ENCODE measurements at regions of chr7 and their contacts with region 1.

Region 1: DNA sequence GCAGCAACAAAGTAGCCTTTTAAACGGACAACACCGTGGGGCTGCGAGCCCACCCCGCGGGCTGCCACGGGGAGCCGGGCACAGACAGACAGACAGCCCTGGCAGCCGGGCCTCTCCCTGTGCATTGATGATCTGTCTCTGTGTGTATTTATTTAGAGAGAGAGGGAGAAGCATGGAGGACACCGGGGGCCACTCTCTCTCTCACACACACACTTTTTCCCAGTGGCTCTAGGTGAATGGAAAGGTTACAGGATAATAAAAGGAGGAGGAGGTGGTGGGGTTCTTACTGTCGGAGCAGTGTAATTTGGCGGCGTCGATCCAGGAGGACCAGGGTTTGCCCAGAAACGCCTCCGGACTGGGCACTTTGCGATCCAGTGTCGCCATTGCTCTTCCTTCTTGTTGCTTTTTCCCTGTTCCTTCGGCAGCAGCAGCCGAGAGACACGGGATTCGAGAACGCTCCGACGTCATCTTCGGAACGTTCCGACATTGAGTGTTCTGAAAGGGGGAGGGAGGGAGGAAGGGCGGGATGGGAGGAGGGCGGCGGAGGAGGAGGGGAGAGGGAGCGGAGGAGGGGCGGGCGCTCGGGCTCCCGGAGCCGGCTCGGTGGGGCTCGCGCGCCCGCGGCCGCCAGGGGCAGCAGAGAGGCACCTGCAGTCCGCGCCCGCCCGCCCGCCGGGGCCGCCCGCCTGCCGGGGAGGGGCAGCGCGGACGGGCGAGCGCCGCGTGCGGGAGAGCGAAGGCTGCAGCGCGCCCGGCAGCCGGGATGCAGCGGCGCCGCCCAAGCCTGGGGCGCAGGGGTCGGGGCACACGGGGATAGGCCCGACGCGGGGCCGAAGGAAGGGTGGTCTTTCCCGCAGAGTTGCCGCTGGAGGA is at the start of gene ATXN7L1:
- DNase-seq: peak; percentile 75 to 94 (median 87)
- ATAC-seq: peak; percentile 99
- H3K4me3 ChIP-seq: peak within 1 kb of the TSS; percentile 97
- H3K4me3 Mint-ChIP-seq: peak within 1 kb of the TSS; percentile 90 to 100 (median 99)
- H3K27ac ChIP-seq: peak within 1 kb of the TSS; percentile 81
- H3K27ac Mint-ChIP-seq: peak within 1 kb of the TSS; percentile 85 to 99 (median 98)
- H3K4me1 ChIP-seq: peaks cover 10 to 33% of the 10 kb centered on the region in 2 donors
- H3K4me1 Mint-ChIP-seq: peaks cover 34 to 73% (median 52%) of the 10 kb centered on the region in 7 donors
- H3K27me3 ChIP-seq: no peaks in the 10 kb centered on the region
- H3K27me3 Mint-ChIP-seq: peaks cover 0 to 34% (median 0%) of the 10 kb centered on the region in 5 donors
- total RNA-seq, gene ATXN7L1: 18.5 to 52.4 (median 46.7) TPM

Region 2: GRCh38 chr7:105531792-105532671 is 344.3 kb before region 1 on chr7 and contains the start of gene RINT1:
- CTCF ChIA-PET with region 1: no interaction called
- POLR2A ChIA-PET with region 1: no interaction called
- intact Hi-C with region 1: loop called in 1 of 2 experiments (anchors 5 kb)
- DNase-seq: peak; percentile 72 to 90 (median 81)
- ATAC-seq: peak; percentile 97
- H3K4me3 ChIP-seq: peak within 1 kb of the TSS; percentile 86
- H3K4me3 Mint-ChIP-seq: peak within 1 kb of the TSS; percentile 87 to 99 (median 93)
- H3K27ac ChIP-seq: peak within 1 kb of the TSS; percentile 83
- H3K27ac Mint-ChIP-seq: peak within 1 kb of the TSS; percentile 87 to 98 (median 92)
- H3K4me1 ChIP-seq: peaks cover 13 to 18% of the 10 kb centered on the region in 2 donors
- H3K4me1 Mint-ChIP-seq: peaks cover 21 to 59% (median 38%) of the 10 kb centered on the region in 7 donors
- H3K27me3 ChIP-seq: no peaks in the 10 kb centered on the region
- H3K27me3 Mint-ChIP-seq: no peaks in the 10 kb centered on the region
- total RNA-seq, gene RINT1: 23.0 to 31.8 (median 26.0) TPM

Region 3: GRCh38 chr7:105691733-105692564 is 184.4 kb before region 1 on chr7:
- CTCF ChIA-PET with region 1: no interaction called
- POLR2A ChIA-PET with region 1: interaction called, 9 read pairs
- intact Hi-C with region 1: loop called in 1 of 2 experiments (anchors 1 kb)
- DNase-seq: peak; percentile 22 to 94 (median 90)
- ATAC-seq: peak; percentile 89
- H3K4me3 ChIP-seq: peak overlapping the region; percentile 94
- H3K4me3 Mint-ChIP-seq: peak overlapping the region; percentile 84 to 98 (median 92)
- H3K27ac ChIP-seq: peak overlapping the region; percentile 83
- H3K27ac Mint-ChIP-seq: peak overlapping the region; percentile 95 to 100 (median 99)
- H3K4me1 ChIP-seq: peaks cover 19 to 21% of the 10 kb centered on the region in 2 donors
- H3K4me1 Mint-ChIP-seq: peaks cover 33 to 78% (median 65%) of the 10 kb centered on the region in 7 donors
- H3K27me3 ChIP-seq: no peaks in the 10 kb centered on the region
- H3K27me3 Mint-ChIP-seq: no peaks in the 10 kb centered on the region

Region 4: DNA sequence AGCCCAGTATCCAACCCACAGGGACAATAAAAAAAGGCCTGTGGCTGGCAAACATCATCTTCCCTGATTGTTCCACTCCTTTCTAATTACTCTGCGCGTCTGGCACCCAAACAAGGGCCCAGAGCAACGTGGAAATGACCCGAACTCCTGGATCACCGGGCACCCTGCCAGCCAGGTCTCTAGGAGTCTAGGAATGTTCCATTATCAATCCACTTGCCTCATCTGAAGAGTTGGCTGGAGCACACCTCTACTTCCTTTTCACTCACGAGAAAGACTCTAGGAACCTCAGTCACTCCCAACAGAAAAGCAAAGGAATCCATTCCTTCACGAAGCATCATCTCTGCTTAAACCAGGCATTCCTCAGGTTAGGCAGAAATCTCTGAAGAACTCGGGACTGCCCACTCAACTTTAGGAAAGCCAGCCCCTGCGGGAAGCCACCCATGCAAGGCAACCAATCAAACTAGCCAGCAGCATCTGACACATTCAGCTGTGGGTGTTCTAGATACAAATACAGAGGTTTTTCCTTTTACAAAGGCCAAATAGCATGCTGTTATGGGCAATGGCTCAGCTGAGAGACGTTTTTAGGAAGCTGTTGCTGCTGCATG is 37.6 kb before region 1 on chr7:
- CTCF ChIA-PET with region 1: no interaction called
- POLR2A ChIA-PET with region 1: no interaction called
- intact Hi-C with region 1: no loop called
- DNase-seq: no peak
- ATAC-seq: no peak
- H3K4me3 ChIP-seq: no peak overlapping the region
- H3K4me3 Mint-ChIP-seq: no peak overlapping the region
- H3K27ac ChIP-seq: no peak overlapping the region
- H3K27ac Mint-ChIP-seq: peak overlapping the region in 1 of 9 donors; percentile 17
- H3K4me1 ChIP-seq: peaks cover 0 to 3% of the 10 kb centered on the region in 2 donors
- H3K4me1 Mint-ChIP-seq: peaks cover 4 to 40% (median 17%) of the 10 kb centered on the region in 7 donors
- H3K27me3 ChIP-seq: no peaks in the 10 kb centered on the region
- H3K27me3 Mint-ChIP-seq: peaks cover 0 to 7% (median 0%) of the 10 kb centered on the region in 5 donors

Region 5: DNA sequence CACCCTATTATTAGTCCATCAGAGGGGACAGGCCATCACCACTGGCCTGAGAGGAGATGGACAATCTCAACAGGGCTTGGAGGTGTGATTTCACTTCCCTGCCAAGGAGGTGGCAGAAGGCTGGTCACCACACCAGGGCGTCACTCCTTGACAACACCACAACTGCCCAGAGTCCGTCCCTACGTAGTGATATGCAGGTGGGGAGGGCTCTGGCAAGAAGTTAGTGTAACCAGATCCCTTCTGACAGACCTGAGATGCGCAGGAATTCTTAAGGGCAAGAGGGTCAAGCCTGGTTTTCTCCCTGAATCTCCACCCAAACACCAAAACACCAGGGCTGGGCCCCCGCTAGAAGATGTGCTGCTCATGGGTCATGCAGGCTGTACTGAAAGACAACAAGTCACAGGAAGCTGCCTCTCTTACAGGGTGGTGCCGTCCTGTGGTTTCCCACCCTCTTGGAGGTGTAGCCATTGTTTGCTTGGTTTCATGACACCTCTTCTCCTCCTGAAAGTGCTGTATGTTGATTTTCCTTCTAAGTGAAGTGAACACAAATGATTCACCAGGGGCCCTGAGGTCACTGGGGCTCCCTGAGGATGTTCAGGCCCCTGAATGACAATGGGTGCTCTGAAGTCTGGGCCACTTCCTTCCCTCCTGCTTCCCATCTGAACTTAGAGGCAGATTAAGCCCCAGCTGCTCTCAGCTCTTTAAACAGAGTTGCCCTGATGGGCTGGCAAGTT is 27.0 kb before region 1 on chr7:
- CTCF ChIA-PET with region 1: interaction called, 4 read pairs
- POLR2A ChIA-PET with region 1: interaction called, 9 read pairs
- intact Hi-C with region 1: loop called (anchors 1 kb)
- DNase-seq: peak; percentile 16 to 69 (median 60)
- ATAC-seq: peak; percentile 94
- H3K4me3 ChIP-seq: peak overlapping the region; percentile 38
- H3K4me3 Mint-ChIP-seq: peak overlapping the region; percentile 74 to 85 (median 83)
- H3K27ac ChIP-seq: peak overlapping the region; percentile 43
- H3K27ac Mint-ChIP-seq: peak overlapping the region; percentile 82 to 98 (median 92)
- H3K4me1 ChIP-seq: peaks cover 46 to 47% of the 10 kb centered on the region in 2 donors
- H3K4me1 Mint-ChIP-seq: peaks cover 44 to 78% (median 69%) of the 10 kb centered on the region in 7 donors
- H3K27me3 ChIP-seq: no peaks in the 10 kb centered on the region
- H3K27me3 Mint-ChIP-seq: peaks cover 0 to 2% (median 0%) of the 10 kb centered on the region in 5 donors

Region 6: DNA sequence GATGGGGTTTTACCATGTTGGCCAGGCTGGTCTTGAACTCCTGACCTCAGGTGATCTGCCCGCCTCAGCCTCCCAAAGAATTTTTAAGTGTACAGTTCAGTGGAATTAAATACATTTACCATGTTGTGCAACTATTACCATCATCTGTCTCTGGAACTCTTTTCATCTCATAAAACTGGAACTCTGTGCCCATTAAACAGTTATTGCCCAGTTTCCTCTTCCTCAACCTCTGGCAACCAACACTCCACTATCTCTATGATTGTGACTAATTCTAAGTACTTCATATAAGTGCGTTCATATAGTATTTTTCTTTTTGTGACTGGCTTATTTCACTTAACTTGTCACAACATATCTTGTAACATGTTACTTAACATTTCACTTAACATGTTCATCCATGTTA is 41.3 kb after region 1 on chr7:
- CTCF ChIA-PET with region 1: no interaction called
- POLR2A ChIA-PET with region 1: no interaction called
- intact Hi-C with region 1: no loop called
- DNase-seq: no peak
- ATAC-seq: no peak
- H3K4me3 ChIP-seq: no peak overlapping the region
- H3K4me3 Mint-ChIP-seq: no peak overlapping the region
- H3K27ac ChIP-seq: no peak overlapping the region
- H3K27ac Mint-ChIP-seq: no peak overlapping the region
- H3K4me1 ChIP-seq: no peaks in the 10 kb centered on the region
- H3K4me1 Mint-ChIP-seq: peaks cover 0 to 11% (median 0%) of the 10 kb centered on the region in 7 donors
- H3K27me3 ChIP-seq: no peaks in the 10 kb centered on the region
- H3K27me3 Mint-ChIP-seq: peaks cover 0 to 24% (median 0%) of the 10 kb centered on the region in 5 donors

Region 7: DNA sequence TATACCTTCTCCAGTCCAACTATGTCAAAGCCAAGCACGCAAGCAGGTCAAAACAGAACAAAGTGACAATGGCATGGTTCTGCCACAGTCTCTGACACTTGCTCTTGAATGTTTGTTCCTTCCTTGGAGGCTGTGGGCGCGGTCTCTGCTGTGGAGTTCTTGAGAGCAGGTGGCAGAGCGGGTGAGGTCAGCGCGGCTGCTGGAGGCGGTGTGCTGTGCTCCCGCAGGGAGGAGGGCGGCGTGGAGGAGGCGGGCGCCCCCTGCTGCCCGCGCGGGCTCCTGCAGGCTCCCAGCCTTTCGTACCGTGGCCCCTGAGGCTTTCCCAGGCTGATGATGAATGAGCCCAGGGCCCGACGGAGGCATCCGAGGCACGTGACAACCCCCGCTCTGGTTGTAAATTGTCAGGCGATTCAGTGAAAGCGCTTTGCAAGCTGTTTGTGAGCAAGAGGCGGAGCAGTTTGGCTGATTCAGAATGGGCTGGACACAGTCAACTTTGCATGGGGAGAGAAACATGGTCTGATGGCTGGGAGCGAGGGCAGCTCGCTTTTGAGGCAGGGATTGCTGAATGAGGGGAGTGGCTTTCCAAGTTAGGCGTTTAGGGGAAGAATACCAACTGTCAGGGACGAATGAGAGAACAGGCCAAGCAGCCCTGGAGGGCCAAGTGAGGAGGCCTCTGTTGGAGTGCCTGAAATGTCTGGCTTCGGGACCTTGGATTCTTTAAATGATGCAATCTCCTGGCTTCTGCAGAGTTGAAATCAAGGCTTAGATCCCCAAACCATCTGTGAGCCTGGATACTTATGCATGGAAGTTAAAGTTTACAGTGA is 133.3 kb after region 1 on chr7:
- CTCF ChIA-PET with region 1: interaction called, 3 read pairs
- POLR2A ChIA-PET with region 1: interaction called, 5 read pairs
- intact Hi-C with region 1: loop called (anchors 1 kb)
- DNase-seq: peak; percentile 73 to 85 (median 81)
- ATAC-seq: peak; percentile 99
- H3K4me3 ChIP-seq: no peak overlapping the region
- H3K4me3 Mint-ChIP-seq: peak overlapping the region in 9 of 10 donors; percentile 36 to 69 (median 55)
- H3K27ac ChIP-seq: no peak overlapping the region
- H3K27ac Mint-ChIP-seq: peak overlapping the region in 7 of 9 donors; percentile 38 to 93 (median 86)
- H3K4me1 ChIP-seq: peaks cover 0 to 30% of the 10 kb centered on the region in 2 donors
- H3K4me1 Mint-ChIP-seq: peaks cover 17 to 51% (median 45%) of the 10 kb centered on the region in 7 donors
- H3K27me3 ChIP-seq: no peaks in the 10 kb centered on the region
- H3K27me3 Mint-ChIP-seq: peaks cover 0 to 42% (median 0%) of the 10 kb centered on the region in 5 donors